Endothelial cell of umbilical vein (primary cell): ENCODE measurements at regions of chr11 and their contacts with region 1.

Region 1: DNA sequence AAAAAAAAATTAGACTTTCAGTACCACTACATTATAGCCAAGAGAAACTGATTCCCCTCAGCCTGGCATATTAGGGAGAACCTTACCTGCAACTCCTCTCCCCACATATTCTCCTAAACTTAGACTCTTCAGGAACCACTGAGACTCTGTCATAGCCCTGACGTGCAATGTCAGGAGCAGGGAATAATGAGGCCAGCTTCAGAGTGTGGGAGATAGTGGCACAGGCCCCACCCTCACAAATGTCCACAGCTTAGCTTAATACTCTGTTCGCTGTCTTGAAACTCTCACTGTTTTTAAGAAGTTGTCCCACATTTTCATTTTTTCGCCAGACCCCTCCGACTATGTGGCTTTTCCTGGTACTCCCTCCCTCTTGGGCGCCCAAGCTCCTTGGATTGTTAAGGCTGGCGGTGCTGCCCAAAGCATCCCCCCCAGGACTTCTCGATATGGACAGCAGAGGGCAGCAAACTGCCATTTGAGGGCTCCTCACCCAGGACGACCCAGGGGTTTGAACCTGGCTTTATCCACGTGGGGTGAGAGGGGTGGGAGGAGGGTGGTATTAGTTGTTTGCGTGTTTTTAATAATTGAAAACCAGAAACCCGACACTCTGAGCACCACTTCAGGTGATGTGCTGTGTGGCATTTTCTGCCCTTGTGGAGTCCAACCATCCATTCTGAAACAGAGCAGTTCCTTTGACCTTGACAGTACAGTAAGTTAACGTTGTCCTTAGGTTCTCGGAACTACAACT is 45.2 kb upstream of the RASSF10 start:
- DNase-seq: peak; percentile 58
- H3K4me3 ChIP-seq: no peak overlapping the region
- H3K27ac ChIP-seq: no peak overlapping the region
- H3K4me1 ChIP-seq: no peaks in the 10 kb centered on the region
- H3K27me3 ChIP-seq: peaks cover 7 to 12% of the 10 kb centered on the region in 2 experiments
- CTCF ChIP-seq: peak; percentile 78 to 81
- POLR2A ChIP-seq: no peak

Region 2: GRCh38 chr11:12979928-12980689 is 16.1 kb after region 1 on chr11:
- CTCF ChIA-PET with region 1: interaction called, 56 read pairs
- POLR2A ChIA-PET with region 1: no interaction called
- dilution Hi-C with region 1: no loop called
- intact Hi-C with region 1: no loop called
- DNase-seq: no peak
- H3K4me3 ChIP-seq: no peak overlapping the region
- H3K27ac ChIP-seq: no peak overlapping the region
- H3K4me1 ChIP-seq: no peaks in the 10 kb centered on the region
- H3K27me3 ChIP-seq: peaks cover 33 to 43% of the 10 kb centered on the region in 2 experiments
- CTCF ChIP-seq: no peak
- POLR2A ChIP-seq: no peak

Region 3: GRCh38 chr11:12993626-12994025 is 29.7 kb after region 1 on chr11:
- CTCF ChIA-PET with region 1: no interaction called
- POLR2A ChIA-PET with region 1: no interaction called
- dilution Hi-C with region 1: no loop called
- intact Hi-C with region 1: no loop called
- DNase-seq: no peak
- H3K4me3 ChIP-seq: no peak overlapping the region
- H3K27ac ChIP-seq: no peak overlapping the region
- H3K4me1 ChIP-seq: no peaks in the 10 kb centered on the region
- H3K27me3 ChIP-seq: peaks cover 11 to 15% of the 10 kb centered on the region in 2 experiments
- CTCF ChIP-seq: no peak
- POLR2A ChIP-seq: no peak

Region 4: GRCh38 chr11:13145461-13145860 is 181.5 kb after region 1 on chr11:
- CTCF ChIA-PET with region 1: interaction called, 265 read pairs
- POLR2A ChIA-PET with region 1: no interaction called
- dilution Hi-C with region 1: loop called (anchors 25 kb)
- intact Hi-C with region 1: no loop called
- DNase-seq: no peak
- H3K4me3 ChIP-seq: no peak overlapping the region
- H3K27ac ChIP-seq: no peak overlapping the region
- H3K4me1 ChIP-seq: peaks cover 7% of the 10 kb centered on the region
- H3K27me3 ChIP-seq: no peaks in the 10 kb centered on the region
- CTCF ChIP-seq: no peak
- POLR2A ChIP-seq: no peak

Region 5: DNA sequence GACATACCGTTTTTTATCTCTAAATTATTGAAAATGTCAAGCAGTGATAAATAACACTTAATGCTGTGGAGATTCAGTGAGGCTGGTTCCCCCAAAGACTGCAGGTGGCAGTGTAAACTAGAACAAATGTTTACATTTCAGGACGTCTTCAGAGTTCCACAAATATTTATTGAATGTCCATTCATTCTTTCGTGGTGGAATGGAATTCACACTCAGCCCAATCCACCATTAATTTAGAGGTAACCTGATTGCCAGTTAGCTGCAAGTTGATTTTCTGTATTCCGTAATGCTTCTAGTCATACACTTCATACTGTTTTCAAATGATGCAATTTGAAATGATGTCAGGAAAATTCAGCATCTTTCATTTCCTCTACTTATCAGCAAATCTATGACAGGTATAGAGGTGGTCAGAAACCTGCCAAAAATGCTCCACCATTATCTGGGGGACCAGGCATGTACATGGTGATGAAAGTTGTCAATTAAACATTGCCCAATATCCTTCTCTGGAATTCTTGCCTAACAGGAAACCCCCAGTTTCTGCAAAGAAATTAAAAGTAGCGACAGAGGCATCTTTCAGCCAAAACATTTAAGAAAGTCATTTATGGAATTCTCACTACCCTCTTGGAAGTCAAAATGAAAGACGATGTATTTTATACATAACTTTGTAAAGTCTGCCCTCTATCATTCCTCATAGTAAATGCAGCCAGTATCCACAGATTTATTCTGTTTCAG is 219.3 kb after region 1 on chr11:
- CTCF ChIA-PET with region 1: interaction called, 67 read pairs
- POLR2A ChIA-PET with region 1: no interaction called
- dilution Hi-C with region 1: no loop called
- intact Hi-C with region 1: loop called (anchors 1 kb)
- DNase-seq: peak; percentile 56
- H3K4me3 ChIP-seq: no peak overlapping the region
- H3K27ac ChIP-seq: no peak overlapping the region
- H3K4me1 ChIP-seq: peaks cover 6% of the 10 kb centered on the region
- H3K27me3 ChIP-seq: peaks cover 8 to 12% of the 10 kb centered on the region in 2 experiments
- CTCF ChIP-seq: peak; percentile 34 to 46
- POLR2A ChIP-seq: no peak

Region 6: DNA sequence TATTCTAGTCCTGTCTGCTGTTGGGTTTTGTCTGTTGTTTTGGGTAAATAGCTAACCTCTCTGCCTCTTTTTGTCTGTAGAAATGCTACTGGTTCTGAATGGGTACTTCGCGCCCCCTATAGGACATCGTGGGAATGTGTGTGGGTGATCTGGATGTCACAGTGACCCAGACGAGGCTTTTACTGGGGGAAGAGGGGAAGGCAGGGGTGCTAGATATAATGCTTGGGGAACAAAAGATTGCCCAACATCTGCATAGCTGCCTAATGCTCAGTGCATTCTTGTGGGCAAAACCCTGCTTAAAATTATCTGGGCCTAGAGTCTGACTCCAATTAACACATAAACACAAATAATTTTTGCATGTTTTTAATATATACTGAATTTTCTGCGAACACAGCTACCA is 371.4 kb after region 1 on chr11:
- CTCF ChIA-PET with region 1: interaction called, 11 read pairs
- POLR2A ChIA-PET with region 1: no interaction called
- dilution Hi-C with region 1: no loop called
- intact Hi-C with region 1: no loop called
- DNase-seq: peak; percentile 61
- H3K4me3 ChIP-seq: no peak overlapping the region
- H3K27ac ChIP-seq: no peak overlapping the region
- H3K4me1 ChIP-seq: peaks cover 27% of the 10 kb centered on the region
- H3K27me3 ChIP-seq: no peaks in the 10 kb centered on the region
- CTCF ChIP-seq: peak; percentile 82 to 91
- POLR2A ChIP-seq: no peak